WTC11 (cell line): ENCODE measurements at regions of chr4 and their contacts with region 1.

Region 1: GRCh38 chr4:169810325-169811323 is 52.9 kb upstream of the HPF1 start:
- DNase-seq: no peak
- ATAC-seq: peak; percentile 69
- H3K4me3 Mint-ChIP-seq: no peak overlapping the region
- H3K27ac Mint-ChIP-seq: no peak overlapping the region
- H3K4me1 Mint-ChIP-seq: no peaks in the 10 kb centered on the region
- H3K27me3 Mint-ChIP-seq: no peaks in the 10 kb centered on the region
- CTCF ChIP-seq: peak; percentile 62

Region 2: DNA sequence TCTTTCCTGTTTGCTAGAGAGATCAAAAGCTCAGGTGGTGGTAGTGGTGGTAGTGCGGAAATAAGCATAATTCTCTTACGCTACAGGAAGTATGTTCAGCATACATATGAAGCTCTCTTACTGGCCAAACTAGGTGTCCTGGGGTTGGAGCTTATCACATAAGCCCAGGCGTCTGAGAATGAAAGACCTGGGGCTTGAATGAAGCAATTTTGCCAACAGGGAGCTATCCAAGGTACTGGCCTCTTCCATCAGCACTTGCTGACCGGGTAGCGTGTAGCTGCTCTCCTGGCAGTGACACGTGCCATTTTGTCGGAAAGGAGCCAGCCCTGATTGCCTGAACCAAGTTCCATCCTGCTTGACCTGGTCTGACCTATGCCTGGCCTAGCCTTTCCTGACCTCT is 13.1 kb after region 1 on chr4:
- CTCF ChIA-PET with region 1: interaction called, 12 read pairs
- POLR2A ChIA-PET with region 1: no interaction called
- DNase-seq: peak; percentile 65
- ATAC-seq: peak; percentile 89
- H3K4me3 Mint-ChIP-seq: no peak overlapping the region
- H3K27ac Mint-ChIP-seq: no peak overlapping the region
- H3K4me1 Mint-ChIP-seq: no peaks in the 10 kb centered on the region
- H3K27me3 Mint-ChIP-seq: peaks cover 5% of the 10 kb centered on the region; the same call in 1 of the 2 replicates
- CTCF ChIP-seq: no peak

Region 3: GRCh38 chr4:169890906-169891305 is 80.3 kb after region 1 on chr4:
- CTCF ChIA-PET with region 1: no interaction called
- POLR2A ChIA-PET with region 1: no interaction called
- DNase-seq: no peak
- ATAC-seq: peak; percentile 18; the same call in 1 of the 2 replicates
- H3K4me3 Mint-ChIP-seq: no peak overlapping the region
- H3K27ac Mint-ChIP-seq: no peak overlapping the region
- H3K4me1 Mint-ChIP-seq: peaks cover 7% of the 10 kb centered on the region; the same call in 1 of the 2 replicates
- H3K27me3 Mint-ChIP-seq: no peaks in the 10 kb centered on the region
- CTCF ChIP-seq: no peak

Region 4: DNA sequence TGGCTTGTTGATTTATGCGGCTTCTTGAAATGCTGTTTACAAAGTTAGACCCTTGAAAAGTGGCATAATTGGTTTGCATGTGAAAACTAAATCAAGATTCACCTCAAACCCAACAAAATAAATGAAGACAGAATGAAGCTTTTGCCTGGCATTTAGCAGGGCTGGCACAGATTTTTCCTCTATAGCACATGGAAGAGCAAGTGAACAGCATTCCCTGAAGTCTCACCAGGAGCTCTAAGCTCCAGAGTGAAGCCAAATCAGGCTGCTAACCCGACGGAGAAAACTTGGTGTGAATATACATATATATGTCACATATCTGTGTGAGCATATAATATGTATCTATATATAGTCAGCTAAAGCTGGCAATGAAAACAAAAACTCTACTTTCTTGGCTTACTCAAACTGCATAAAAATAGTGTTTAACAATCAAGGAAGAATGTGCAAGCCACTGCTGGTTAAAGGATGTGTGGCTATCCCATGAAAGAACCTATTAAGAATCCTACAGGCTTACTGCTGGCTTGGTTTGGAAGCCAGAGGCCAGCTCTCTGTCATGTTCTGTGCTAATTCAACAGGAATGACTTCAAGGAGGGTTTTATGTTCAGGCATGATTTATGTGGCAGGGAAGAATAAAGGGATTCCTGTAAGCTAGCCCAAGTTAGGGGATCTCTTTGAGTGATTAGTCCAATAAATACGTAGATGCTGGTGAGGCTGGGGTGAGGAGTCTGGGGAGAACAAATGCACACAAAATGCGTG is 145.6 kb after region 1 on chr4:
- CTCF ChIA-PET with region 1: no interaction called
- POLR2A ChIA-PET with region 1: no interaction called
- DNase-seq: no peak
- ATAC-seq: no peak
- H3K4me3 Mint-ChIP-seq: no peak overlapping the region
- H3K27ac Mint-ChIP-seq: peak overlapping the region; percentile 55; the same call in 1 of the 2 replicates
- H3K4me1 Mint-ChIP-seq: peaks cover 26% of the 10 kb centered on the region
- H3K27me3 Mint-ChIP-seq: no peaks in the 10 kb centered on the region
- CTCF ChIP-seq: no peak

Region 5: DNA sequence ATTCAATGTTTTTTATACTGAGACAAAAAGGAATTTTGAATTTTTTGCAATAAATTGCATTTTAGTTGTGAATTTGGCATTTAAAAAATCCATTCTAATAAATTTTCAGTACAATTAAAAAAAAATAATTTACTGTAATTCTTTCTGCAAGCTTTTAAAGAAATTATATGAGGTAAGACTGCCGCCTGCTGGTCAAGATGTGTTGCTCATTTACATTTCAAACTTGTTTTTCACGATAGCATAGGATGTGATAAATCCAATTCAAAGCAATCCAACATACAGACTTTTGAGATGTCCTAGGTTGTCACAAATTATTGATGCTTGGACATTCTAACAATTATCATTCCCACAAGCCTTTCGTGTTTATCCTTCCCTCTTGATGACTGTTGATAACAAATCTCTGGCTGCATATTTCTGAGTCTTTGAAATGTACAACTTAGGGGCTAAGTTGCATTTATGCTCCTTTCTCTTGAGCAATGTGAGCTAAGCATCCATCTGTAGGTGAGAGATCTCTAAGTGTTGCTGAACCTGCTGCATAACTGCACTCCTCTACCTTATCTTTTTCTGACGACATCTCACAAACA is 237.2 kb after region 1 on chr4:
- CTCF ChIA-PET with region 1: interaction called, 18 read pairs
- POLR2A ChIA-PET with region 1: no interaction called
- DNase-seq: peak; percentile 52
- ATAC-seq: 0 out of 2 replicates have a peak, but pooled peaks have one; percentile 22
- H3K4me3 Mint-ChIP-seq: no peak overlapping the region
- H3K27ac Mint-ChIP-seq: no peak overlapping the region
- H3K4me1 Mint-ChIP-seq: peaks cover 13% of the 10 kb centered on the region
- H3K27me3 Mint-ChIP-seq: no peaks in the 10 kb centered on the region
- CTCF ChIP-seq: peak; percentile 73